Heart left ventricle (tissue), 16 donors: ENCODE measurements at regions of chr15 and their contacts with region 1.

Region 1: DNA sequence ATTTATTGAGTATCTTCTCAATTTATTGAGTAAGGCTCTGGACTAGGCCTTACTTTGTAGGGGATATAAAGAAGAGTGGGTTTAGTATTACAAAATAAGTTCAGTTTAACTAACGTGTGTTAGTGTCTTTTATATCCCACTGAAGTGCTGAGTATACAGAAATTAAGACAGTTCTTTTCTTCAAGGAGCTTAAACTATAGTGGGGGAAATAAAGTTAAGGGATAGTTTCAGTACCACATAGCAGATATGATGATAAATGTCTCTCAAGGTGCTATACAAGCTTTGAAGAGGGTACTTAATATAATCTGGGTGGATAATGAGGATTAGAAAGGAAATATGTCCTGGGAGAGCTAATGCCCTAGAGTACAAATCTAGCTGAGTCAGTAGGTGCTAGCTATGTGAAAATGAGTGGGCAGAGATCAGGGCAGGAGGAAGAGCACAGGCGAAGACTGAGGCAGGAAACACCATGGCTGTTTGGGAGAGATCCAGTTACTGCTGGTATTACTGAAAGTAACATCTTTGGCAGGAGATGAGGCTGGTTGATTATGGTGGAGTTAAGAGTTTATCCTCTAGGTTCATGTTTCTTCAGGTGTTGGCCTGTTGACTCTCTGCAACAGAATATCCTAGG is 46.0 kb downstream of the TEX9 start:
- DNase-seq: no peak
- ATAC-seq: no peak
- H3K4me3 ChIP-seq: no peak overlapping the region
- H3K27ac ChIP-seq: no peak overlapping the region
- H3K4me1 ChIP-seq: no peaks in the 10 kb centered on the region
- H3K27me3 ChIP-seq: no peaks in the 10 kb centered on the region
- CTCF ChIP-seq: no peak
- POLR2A ChIP-seq: no peak

Region 2: GRCh38 chr15:56252386-56252785 is 158.8 kb before region 1 on chr15:
- intact Hi-C with region 1: loop called in 1 of 10 experiments (anchors 10 kb)
- DNase-seq: no peak
- ATAC-seq: peak in 1 of 4 donors; percentile 24
- H3K4me3 ChIP-seq: no peak overlapping the region
- H3K27ac ChIP-seq: no peak overlapping the region
- H3K4me1 ChIP-seq: peaks cover 0 to 7% (median 0%) of the 10 kb centered on the region in 12 donors
- H3K27me3 ChIP-seq: peaks cover 0 to 5% (median 0%) of the 10 kb centered on the region in 9 donors
- CTCF ChIP-seq: no peak
- POLR2A ChIP-seq: no peak